ENCODE measurements at regions of chr6 and their contacts with region 1.

Region 1: GRCh38 chr6:45714741-45715507 is 300.7 kb downstream of the CLIC5 start:
- DNase-seq: peak; percentile 49 to 75
- H3K4me3 ChIP-seq: no peak overlapping the region
- H3K27ac ChIP-seq: no peak overlapping the region
- H3K4me1 ChIP-seq: 0 out of 7 replicates have a peak, but pooled peaks cover 0 to 2% (median 0%) of the 10 kb centered on the region in 4 experiments
- H3K27me3 ChIP-seq: peaks cover 0 to 2% (median 0%) of the 10 kb centered on the region in 4 experiments; a peak in 1 of 7 replicates
- CTCF ChIP-seq: peak; percentile 3 to 86 (median 76)
- EP300 ChIP-seq: no peak
- POLR2A ChIP-seq: no peak
- RAD21 ChIP-seq: peak; percentile 98

Region 2: GRCh38 chr6:45917439-45917838 is 202.5 kb after region 1 on chr6:
- CTCF ChIA-PET with region 1: interaction called, 15 read pairs
- POLR2A ChIA-PET with region 1: no interaction called
- DNase-seq: peak in 1 of 2 experiments; percentile 14
- H3K4me3 ChIP-seq: no peak overlapping the region
- H3K27ac ChIP-seq: no peak overlapping the region
- H3K4me1 ChIP-seq: peaks cover 0 to 7% (median 0%) of the 10 kb centered on the region in 4 experiments; a peak in 1 of 7 replicates
- H3K27me3 ChIP-seq: no peaks in the 10 kb centered on the region; a peak in 3 of 7 replicates
- CTCF ChIP-seq: no peak
- EP300 ChIP-seq: no peak
- POLR2A ChIP-seq: no peak
- RAD21 ChIP-seq: no peak

Measured in H1 (cell line).